Mammary epithelial cell (primary cell): ENCODE measurements at regions of chr9 and their contacts with region 1.

Region 1: DNA sequence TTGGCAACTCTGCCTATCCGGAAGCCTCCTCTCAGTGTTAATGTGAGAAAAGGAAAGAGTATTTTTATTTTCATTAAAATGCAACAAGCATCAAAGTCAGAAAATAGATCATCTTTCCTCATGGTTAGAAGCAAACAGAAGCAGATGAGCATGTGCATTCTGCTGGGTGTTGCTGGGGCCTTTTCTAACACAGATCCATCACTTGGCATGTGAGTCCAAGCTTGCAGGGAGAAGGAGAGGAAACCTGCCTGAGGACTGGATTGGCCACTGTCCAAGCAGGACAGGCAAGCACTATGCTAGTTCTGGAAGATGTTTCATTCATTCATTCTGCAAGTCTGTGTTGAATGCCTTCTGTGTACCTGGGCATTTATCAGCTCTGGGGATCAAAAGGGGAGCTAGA is 348.7 kb upstream of the PCSK5 start:
- DNase-seq: no peak
- H3K4me3 ChIP-seq: no peak overlapping the region
- H3K27ac ChIP-seq: no peak overlapping the region
- H3K4me1 ChIP-seq: no peaks in the 10 kb centered on the region
- H3K27me3 ChIP-seq: no peaks in the 10 kb centered on the region
- CTCF ChIP-seq: no peak

Region 2: DNA sequence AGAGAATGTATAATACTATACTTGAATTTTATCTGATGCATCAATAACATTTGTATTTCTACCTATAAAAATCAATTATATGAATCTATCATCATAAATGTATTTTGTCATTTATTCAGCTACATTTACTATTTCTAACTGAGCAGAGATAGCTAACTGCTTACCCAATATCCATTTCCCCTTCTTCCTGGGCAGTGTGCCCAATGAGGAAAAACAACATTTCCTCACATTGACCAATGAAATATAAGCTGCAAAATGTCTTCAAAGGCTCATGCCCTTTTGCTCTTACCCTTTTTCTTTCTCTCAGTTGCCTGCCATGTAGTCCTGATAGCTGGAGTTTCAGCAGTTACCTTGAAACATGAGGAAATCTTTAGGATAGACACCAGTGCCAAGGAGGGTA is 37.0 kb before region 1 on chr9:
- CTCF ChIA-PET with region 1: no interaction called
- dilution Hi-C with region 1: loop called (anchors 5 kb)
- in situ Hi-C with region 1: no loop called
- intact Hi-C with region 1: no loop called
- DNase-seq: no peak
- H3K4me3 ChIP-seq: no peak overlapping the region
- H3K27ac ChIP-seq: no peak overlapping the region
- H3K4me1 ChIP-seq: no peaks in the 10 kb centered on the region
- H3K27me3 ChIP-seq: no peaks in the 10 kb centered on the region
- CTCF ChIP-seq: no peak

Region 3: GRCh38 chr9:76866689-76867088 is 1325.0 kb after region 1 on chr9:
- CTCF ChIA-PET with region 1: no interaction called
- dilution Hi-C with region 1: no loop called
- in situ Hi-C with region 1: no loop called
- intact Hi-C with region 1: no loop called
- DNase-seq: peak; percentile 54
- H3K4me3 ChIP-seq: no peak overlapping the region
- H3K27ac ChIP-seq: no peak overlapping the region
- H3K4me1 ChIP-seq: no peaks in the 10 kb centered on the region
- H3K27me3 ChIP-seq: no peaks in the 10 kb centered on the region
- CTCF ChIP-seq: no peak